Heart right ventricle (tissue), 16 donors: ENCODE measurements at regions of chr5 and their contacts with region 1.

Region 1: GRCh38 chr5:58460732-58461286 is 923 bp upstream of the PLK2 start:
- DNase-seq: peak; percentile 90 to 93
- ATAC-seq: peak; percentile 82 to 93 (median 85)
- H3K4me3 ChIP-seq: peak overlapping the region; percentile 70 to 94 (median 88)
- H3K27ac ChIP-seq: peak overlapping the region; percentile 68 to 99 (median 98)
- H3K4me1 ChIP-seq: peaks cover 0 to 23% (median 12%) of the 10 kb centered on the region in 9 donors
- H3K27me3 ChIP-seq: peaks cover 0 to 20% (median 0%) of the 10 kb centered on the region in 7 donors
- CTCF ChIP-seq: peak; percentile 72 to 94 (median 82)

Region 2: DNA sequence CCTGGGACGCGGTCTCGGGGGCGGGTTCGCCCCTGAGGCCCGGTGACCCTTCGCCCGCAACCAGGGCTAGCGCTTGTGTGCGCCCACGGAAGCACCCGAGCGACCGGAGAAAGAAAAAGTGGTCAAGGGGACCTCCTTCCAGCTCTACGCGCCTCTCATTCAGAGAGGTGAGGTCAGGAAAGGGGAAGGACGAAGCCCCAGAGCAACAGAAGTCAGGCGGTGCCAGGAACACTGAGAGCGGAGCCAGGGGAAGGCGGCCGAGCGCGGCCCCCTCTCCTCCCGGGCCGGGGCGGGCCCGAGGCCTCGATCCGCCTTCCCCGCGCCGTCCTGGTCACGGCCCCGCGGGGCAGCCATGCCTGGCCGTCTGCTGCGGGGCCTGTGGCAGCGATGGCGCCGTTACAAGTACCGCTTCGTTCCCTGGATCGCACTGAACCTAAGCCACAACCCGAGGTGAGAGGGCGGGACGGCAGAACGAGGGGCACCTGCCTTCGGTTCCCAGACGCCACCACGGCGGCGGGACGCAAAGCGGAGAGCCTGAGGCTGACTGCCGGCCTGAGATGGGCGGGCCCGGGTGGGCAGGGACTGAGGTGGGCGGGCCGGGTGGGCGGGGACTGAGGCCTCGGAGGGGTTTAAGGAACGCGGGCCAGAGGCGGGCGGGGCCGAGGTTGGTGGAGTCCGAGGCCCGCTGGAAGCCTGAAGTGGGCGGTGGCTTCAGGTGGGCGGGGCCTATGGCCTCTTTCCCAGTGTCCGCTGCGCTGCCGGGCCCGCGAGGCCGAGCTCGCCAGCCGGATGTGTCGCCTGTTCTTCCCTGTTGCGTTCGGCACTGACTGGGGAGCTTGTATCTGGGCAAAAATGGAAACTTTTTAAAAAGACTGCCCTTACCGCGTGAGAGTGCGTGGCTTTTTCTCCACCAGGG is 1551.3 kb before region 1 on chr5 and contains the start of gene SETD9:
- intact Hi-C with region 1: loop called in 1 of 10 experiments (anchors 10 kb)
- DNase-seq: peak; percentile 98 to 99
- ATAC-seq: peak; percentile 94 to 98 (median 96)
- H3K4me3 ChIP-seq: peak within 1 kb of the TSS; percentile 48 to 90 (median 66)
- H3K27ac ChIP-seq: peak within 1 kb of the TSS; percentile 86 to 98 (median 94)
- H3K4me1 ChIP-seq: peaks cover 0 to 19% (median 10%) of the 10 kb centered on the region in 9 donors
- H3K27me3 ChIP-seq: no peaks in the 10 kb centered on the region
- CTCF ChIP-seq: no peak
- total RNA-seq, gene SETD9: 11.0 to 26.2 (median 16.8) TPM

Region 3: GRCh38 chr5:57642066-57642465 is 818.7 kb before region 1 on chr5:
- intact Hi-C with region 1: loop called in 1 of 10 experiments (anchors 10 kb)
- DNase-seq: no peak
- ATAC-seq: no peak
- H3K4me3 ChIP-seq: no peak overlapping the region
- H3K27ac ChIP-seq: no peak overlapping the region
- H3K4me1 ChIP-seq: no peaks in the 10 kb centered on the region
- H3K27me3 ChIP-seq: no peaks in the 10 kb centered on the region
- CTCF ChIP-seq: no peak

Region 4: GRCh38 chr5:57779383-57780223 is 681.2 kb before region 1 on chr5:
- intact Hi-C with region 1: loop called (anchors 1 to 5 kb)
- DNase-seq: peak in 1 of 2 donors; percentile 56
- ATAC-seq: peak; percentile 71 to 89 (median 83)
- H3K4me3 ChIP-seq: peak overlapping the region in 3 of 10 donors; percentile 2 to 11 (median 8)
- H3K27ac ChIP-seq: peak overlapping the region in 7 of 10 donors; percentile 35 to 73 (median 64)
- H3K4me1 ChIP-seq: peaks cover 0 to 50% (median 13%) of the 10 kb centered on the region in 9 donors
- H3K27me3 ChIP-seq: no peaks in the 10 kb centered on the region
- CTCF ChIP-seq: peak; percentile 23 to 86 (median 69)

Region 5: DNA sequence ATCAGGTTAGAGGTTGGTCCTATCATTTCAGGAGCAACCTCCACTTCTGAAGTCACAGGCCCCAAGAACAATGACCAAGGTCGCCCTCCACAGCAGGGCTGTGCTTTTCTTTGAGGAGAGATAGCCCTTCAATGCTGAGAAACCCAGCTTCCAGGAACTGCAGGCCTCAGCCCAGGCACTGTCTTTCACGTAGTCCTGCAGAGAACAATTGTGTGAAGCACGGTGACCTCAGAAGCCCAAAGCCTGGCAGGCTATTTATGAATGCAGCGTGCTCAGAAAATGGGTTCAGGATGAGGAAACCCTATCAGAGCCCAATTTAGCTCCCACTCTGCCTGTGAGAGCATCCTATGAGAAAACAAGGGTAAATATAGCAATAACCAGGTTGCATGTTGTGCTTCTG is 389.2 kb before region 1 on chr5:
- intact Hi-C with region 1: loop called in 6 of 10 experiments (anchors 2 to 10 kb)
- DNase-seq: peak; percentile 33 to 87
- ATAC-seq: peak; percentile 93 to 98 (median 98)
- H3K4me3 ChIP-seq: no peak overlapping the region
- H3K27ac ChIP-seq: peak overlapping the region; percentile 5 to 92 (median 77)
- H3K4me1 ChIP-seq: peaks cover 2 to 66% (median 52%) of the 10 kb centered on the region in 9 donors
- H3K27me3 ChIP-seq: no peaks in the 10 kb centered on the region
- CTCF ChIP-seq: peak in 1 of 9 donors; percentile 9

Region 6: GRCh38 chr5:58240286-58240685 is 220.5 kb before region 1 on chr5:
- intact Hi-C with region 1: loop called in 7 of 10 experiments (anchors 5 to 10 kb)
- DNase-seq: no peak
- ATAC-seq: no peak
- H3K4me3 ChIP-seq: no peak overlapping the region
- H3K27ac ChIP-seq: peak overlapping the region in 8 of 10 donors; percentile 12 to 91 (median 68)
- H3K4me1 ChIP-seq: peaks cover 0 to 47% (median 9%) of the 10 kb centered on the region in 9 donors
- H3K27me3 ChIP-seq: no peaks in the 10 kb centered on the region
- CTCF ChIP-seq: no peak

Region 7: GRCh38 chr5:58273711-58274110 is 187.1 kb before region 1 on chr5:
- intact Hi-C with region 1: loop called in 2 of 10 experiments (anchors 1 to 10 kb)
- DNase-seq: no peak
- ATAC-seq: peak in 4 of 8 donors; percentile 35 to 71 (median 63)
- H3K4me3 ChIP-seq: no peak overlapping the region
- H3K27ac ChIP-seq: peak overlapping the region in 7 of 10 donors; percentile 2 to 72 (median 49)
- H3K4me1 ChIP-seq: peaks cover 0 to 20% (median 9%) of the 10 kb centered on the region in 9 donors
- H3K27me3 ChIP-seq: no peaks in the 10 kb centered on the region
- CTCF ChIP-seq: no peak

Region 8: GRCh38 chr5:58498340-58498942 is 37.6 kb after region 1 on chr5:
- intact Hi-C with region 1: no loop called
- DNase-seq: peak in 1 of 2 donors; percentile 36
- ATAC-seq: peak in 1 of 8 donors; percentile 52
- H3K4me3 ChIP-seq: no peak overlapping the region
- H3K27ac ChIP-seq: no peak overlapping the region
- H3K4me1 ChIP-seq: peaks cover 0 to 20% (median 0%) of the 10 kb centered on the region in 9 donors
- H3K27me3 ChIP-seq: peaks cover 0 to 12% (median 0%) of the 10 kb centered on the region in 7 donors
- CTCF ChIP-seq: peak; percentile 57 to 82 (median 74)